ENCODE measurements at regions of chr3 and their contacts with region 1.

Region 1: GRCh38 chr3:192727032-192727847 is at the start of gene FGF12:
- DNase-seq: peak; percentile 88
- ATAC-seq: peak; percentile 94
- total RNA-seq, gene FGF12: 356 TPM

Region 2: DNA sequence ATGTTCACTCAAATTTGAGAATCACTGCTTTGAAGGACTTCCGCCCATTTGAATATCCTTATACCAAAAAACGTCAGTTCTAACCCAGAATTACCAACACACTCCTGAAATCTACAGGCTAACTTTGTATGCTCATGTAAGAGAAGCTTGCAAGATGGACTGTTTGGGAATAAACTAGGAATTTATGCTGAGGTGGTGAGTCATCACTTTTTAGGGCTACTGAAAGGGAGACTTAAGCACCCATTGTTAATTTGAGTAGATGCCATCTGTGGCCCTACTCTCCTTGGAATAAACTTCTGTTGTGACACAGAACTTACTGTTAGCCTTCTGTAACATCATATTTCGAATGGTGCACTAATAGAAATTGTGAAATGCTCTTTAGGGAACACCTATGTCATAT is 74.5 kb before region 1 on chr3:
- intact Hi-C with region 1: loop called (anchors 10 kb)
- DNase-seq: no peak
- ATAC-seq: no peak

Region 3: DNA sequence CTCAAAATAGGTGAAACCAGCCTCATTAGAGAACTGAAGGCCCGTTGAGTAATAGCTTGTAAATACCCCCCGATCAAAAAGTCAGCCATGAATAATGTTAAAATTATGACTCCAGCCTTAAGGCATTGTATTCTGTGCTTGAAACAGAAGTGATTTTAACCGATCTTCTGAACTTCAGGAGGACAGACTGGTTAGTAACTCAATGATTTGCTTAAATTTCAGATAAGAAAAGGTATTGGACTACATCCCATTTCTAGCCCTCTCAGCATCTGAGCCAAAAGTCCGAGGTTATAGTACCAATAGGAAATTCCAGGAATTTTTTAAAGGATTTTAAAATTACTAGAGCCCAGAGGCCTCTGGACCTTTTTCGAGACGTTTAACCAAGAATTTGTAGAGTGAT is 67.8 kb after region 1 on chr3:
- intact Hi-C with region 1: no loop called
- DNase-seq: no peak
- ATAC-seq: no peak

Measured in Right ventricle myocardium superior (tissue), 1 donor.